Prostate gland (tissue), 2 donors: ENCODE measurements at regions of chr17 and their contacts with region 1.

Region 1: GRCh38 chr17:75271233-75271954 is 363 bp upstream of the MIF4GD start:
- DNase-seq: peak; percentile 71
- H3K4me3 ChIP-seq: peak overlapping the region; percentile 82 to 84
- H3K27ac ChIP-seq: peak overlapping the region; percentile 79 to 88
- H3K4me1 ChIP-seq: peaks cover 5% of the 10 kb centered on the region
- H3K27me3 ChIP-seq: no peaks in the 10 kb centered on the region
- CTCF ChIP-seq: peak; percentile 65 to 97 (median 83)
- POLR2A ChIP-seq: no peak

Region 2: GRCh38 chr17:75412455-75413317 is 141.3 kb after region 1 on chr17:
- intact Hi-C with region 1: loop called (anchors 5 kb)
- DNase-seq: peak; percentile 38
- H3K4me3 ChIP-seq: no peak overlapping the region
- H3K27ac ChIP-seq: no peak overlapping the region
- H3K4me1 ChIP-seq: no peaks in the 10 kb centered on the region
- H3K27me3 ChIP-seq: no peaks in the 10 kb centered on the region
- CTCF ChIP-seq: peak; percentile 28 to 87 (median 71)
- POLR2A ChIP-seq: no peak